ENCODE measurements at regions of chr4 and their contacts with region 1.

Region 1: DNA sequence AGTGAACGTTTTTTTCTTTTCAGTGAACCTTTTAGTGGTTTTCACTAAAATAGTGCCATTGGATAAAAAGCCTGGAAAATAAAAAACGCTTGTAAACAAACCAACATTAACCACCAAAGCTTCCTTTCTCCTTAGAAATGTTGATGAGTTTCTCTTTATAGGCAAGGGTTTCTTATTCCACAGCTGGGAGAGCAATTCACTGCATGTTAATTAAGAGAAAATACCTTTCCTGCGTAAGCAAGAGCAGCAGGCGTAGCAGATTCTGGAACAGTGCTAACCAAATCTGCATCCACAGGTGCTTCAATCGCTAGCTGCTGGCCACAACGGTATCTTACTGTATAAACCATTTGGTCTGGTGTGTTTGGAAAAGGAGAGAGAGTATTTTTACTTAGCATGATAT is 13.3 kb upstream of the AASDH start:
- DNase-seq: no peak
- ATAC-seq: no peak
- H3K4me3 Mint-ChIP-seq: no peak overlapping the region
- H3K27ac Mint-ChIP-seq: no peak overlapping the region
- H3K4me1 Mint-ChIP-seq: no peaks in the 10 kb centered on the region
- H3K27me3 Mint-ChIP-seq: no peaks in the 10 kb centered on the region
- CTCF ChIP-seq: no peak

Region 2: GRCh38 chr4:56372774-56373173 is 27.8 kb before region 1 on chr4:
- CTCF ChIA-PET with region 1: no interaction called
- POLR2A ChIA-PET with region 1: no interaction called
- intact Hi-C with region 1: no loop called
- DNase-seq: no peak
- ATAC-seq: no peak
- H3K4me3 Mint-ChIP-seq: no peak overlapping the region
- H3K27ac Mint-ChIP-seq: no peak overlapping the region
- H3K4me1 Mint-ChIP-seq: peaks cover 3% of the 10 kb centered on the region
- H3K27me3 Mint-ChIP-seq: no peaks in the 10 kb centered on the region
- CTCF ChIP-seq: no peak

Region 3: GRCh38 chr4:56424697-56425514 is 24.3 kb after region 1 on chr4:
- CTCF ChIA-PET with region 1: interaction called, 10 read pairs
- POLR2A ChIA-PET with region 1: interaction called, 4 read pairs
- intact Hi-C with region 1: no loop called
- DNase-seq: peak; percentile 62
- ATAC-seq: no peak
- H3K4me3 Mint-ChIP-seq: no peak overlapping the region
- H3K27ac Mint-ChIP-seq: no peak overlapping the region
- H3K4me1 Mint-ChIP-seq: peaks cover 31% of the 10 kb centered on the region
- H3K27me3 Mint-ChIP-seq: no peaks in the 10 kb centered on the region
- CTCF ChIP-seq: peak; percentile 72

Measured in activated CD8-positive, alpha-beta T cell treated with anti-CD3 and anti-CD28 coated beads for 36 hours (primary cell).